ENCODE measurements at regions of chr1 and their contacts with region 1.

Region 1: DNA sequence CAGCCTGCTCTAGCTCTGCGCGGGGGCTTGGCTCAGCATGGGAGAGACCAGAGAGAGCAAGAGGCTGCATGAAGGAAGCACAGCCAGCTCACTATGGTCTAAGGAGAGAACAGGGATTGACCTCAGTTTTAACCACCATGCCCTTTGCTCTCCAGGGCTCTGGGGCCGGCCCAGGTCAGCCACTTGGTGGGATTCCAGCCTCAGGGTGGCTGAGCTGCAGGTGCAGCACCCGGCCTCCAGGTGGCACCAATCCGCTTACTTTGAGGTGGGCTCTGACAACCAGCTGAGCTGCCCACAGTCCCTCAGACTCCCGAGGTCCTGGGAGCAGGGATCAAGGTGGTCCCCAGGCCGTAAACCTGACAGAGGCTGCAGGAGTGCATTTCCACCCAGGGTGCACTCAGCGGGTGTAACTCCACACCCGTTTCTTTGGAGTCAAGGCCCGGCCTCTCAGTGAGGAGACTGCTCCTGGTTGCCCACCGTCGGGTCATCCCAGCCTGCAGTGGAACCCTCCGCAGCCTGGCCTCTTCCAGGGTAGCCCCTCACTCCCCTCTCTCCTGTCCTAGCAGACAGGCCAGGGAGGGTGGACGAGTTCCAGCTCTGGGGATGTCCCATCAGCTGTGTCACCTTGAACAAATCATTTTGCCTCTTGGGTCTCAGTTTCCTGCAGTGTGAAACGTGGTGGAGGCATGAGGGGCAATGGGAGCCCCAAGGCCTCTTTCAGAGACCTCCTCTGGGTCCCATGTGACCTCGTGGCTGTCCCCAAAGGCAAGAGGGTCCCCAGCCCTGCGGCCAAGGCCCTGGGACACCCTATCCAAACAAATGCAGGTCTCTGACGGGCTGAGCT is 607 bp upstream of the LGR6 start:
- DNase-seq: peak; percentile 68
- H3K4me3 Mint-ChIP-seq: no peak overlapping the region
- H3K27ac Mint-ChIP-seq: no peak overlapping the region
- H3K4me1 Mint-ChIP-seq: peaks cover 3% of the 10 kb centered on the region
- H3K27me3 Mint-ChIP-seq: peaks cover 25% of the 10 kb centered on the region

Region 2: GRCh38 chr1:202176949-202177927 is 15.8 kb before region 1 on chr1:
- CTCF ChIA-PET with region 1: interaction called, 13 read pairs
- POLR2A ChIA-PET with region 1: no interaction called
- intact Hi-C with region 1: no loop called
- DNase-seq: no peak
- H3K4me3 Mint-ChIP-seq: no peak overlapping the region
- H3K27ac Mint-ChIP-seq: no peak overlapping the region
- H3K4me1 Mint-ChIP-seq: no peaks in the 10 kb centered on the region
- H3K27me3 Mint-ChIP-seq: no peaks in the 10 kb centered on the region

Region 3: DNA sequence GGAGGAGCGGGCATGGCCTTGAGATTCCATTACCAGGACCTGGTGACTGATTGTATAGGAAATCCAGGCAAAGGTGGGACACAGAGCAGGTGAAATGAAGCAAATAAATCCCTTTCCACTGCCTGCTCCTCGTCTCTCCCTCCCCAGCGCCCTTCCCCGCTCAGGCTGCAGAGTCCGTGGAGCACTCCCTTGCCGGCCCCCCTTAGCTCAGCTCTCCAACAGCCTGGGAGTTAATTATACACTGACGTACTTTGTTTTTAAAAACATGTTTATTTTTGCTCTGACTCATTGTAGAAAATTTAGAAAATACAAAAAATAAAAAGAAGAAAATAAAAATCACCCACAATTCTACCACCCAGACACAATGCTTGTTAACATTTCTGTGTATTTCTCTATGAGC is 62.4 kb after region 1 on chr1:
- CTCF ChIA-PET with region 1: no interaction called
- POLR2A ChIA-PET with region 1: no interaction called
- intact Hi-C with region 1: no loop called
- DNase-seq: no peak
- H3K4me3 Mint-ChIP-seq: no peak overlapping the region
- H3K27ac Mint-ChIP-seq: no peak overlapping the region
- H3K4me1 Mint-ChIP-seq: no peaks in the 10 kb centered on the region
- H3K27me3 Mint-ChIP-seq: peaks cover 11% of the 10 kb centered on the region

Region 4: DNA sequence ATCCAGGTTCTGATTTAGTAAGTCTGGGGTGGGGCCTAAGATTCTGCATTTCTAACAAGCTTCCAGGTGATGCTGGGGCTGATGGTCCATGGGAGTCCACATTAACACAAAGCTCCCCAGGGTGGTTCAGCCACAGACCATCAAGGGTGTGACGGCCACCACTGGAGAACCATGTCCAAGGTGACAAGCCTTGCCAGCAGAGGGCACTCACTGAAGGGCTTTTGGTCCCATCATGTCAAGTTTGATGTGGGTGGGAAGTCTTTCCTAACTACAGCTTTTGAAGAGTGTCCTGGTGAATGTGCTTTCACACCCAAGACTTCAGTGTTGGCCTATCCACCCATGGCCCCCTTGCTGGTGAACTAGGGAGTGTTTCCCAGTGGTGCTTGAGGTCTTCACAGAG is 81.6 kb after region 1 on chr1:
- CTCF ChIA-PET with region 1: interaction called, 11 read pairs
- POLR2A ChIA-PET with region 1: no interaction called
- intact Hi-C with region 1: no loop called
- DNase-seq: peak; percentile 68
- H3K4me3 Mint-ChIP-seq: no peak overlapping the region
- H3K27ac Mint-ChIP-seq: no peak overlapping the region
- H3K4me1 Mint-ChIP-seq: no peaks in the 10 kb centered on the region
- H3K27me3 Mint-ChIP-seq: peaks cover 3% of the 10 kb centered on the region

Region 5: DNA sequence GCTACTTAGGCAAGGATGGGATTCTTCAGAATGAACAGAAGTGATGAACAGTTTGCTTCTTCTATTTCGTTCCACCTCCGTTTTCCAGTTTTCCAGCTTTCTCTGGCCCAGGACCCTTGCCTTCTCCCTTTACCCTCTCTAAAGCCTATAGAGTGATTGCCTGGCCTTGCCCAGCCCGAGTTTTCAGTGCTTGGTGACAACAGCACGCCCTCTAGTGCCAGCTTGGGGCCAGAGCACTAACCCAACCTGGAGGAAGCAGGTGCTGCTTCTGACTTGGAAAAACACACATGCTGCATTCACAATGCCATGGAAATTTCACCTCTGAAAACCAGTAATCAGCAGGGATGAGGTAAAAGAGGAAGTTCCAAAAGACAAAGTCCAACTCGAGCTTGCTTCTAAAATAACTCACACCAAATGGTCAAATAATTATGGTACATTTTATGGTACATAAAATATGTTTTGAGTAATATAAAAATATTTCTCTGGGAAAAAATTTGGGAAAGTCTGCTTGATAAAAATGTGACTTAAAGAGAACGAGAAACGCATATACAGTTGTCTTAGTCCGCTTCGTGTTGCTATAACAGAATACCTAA is 122.7 kb after region 1 on chr1:
- CTCF ChIA-PET with region 1: interaction called, 64 read pairs
- POLR2A ChIA-PET with region 1: no interaction called
- intact Hi-C with region 1: loop called (anchors 1 kb)
- DNase-seq: peak; percentile 84
- H3K4me3 Mint-ChIP-seq: no peak overlapping the region
- H3K27ac Mint-ChIP-seq: no peak overlapping the region
- H3K4me1 Mint-ChIP-seq: peaks cover 5% of the 10 kb centered on the region
- H3K27me3 Mint-ChIP-seq: peaks cover 4% of the 10 kb centered on the region